Cardiac septum (tissue), 1 donor: ENCODE measurements at regions of chr11 and their contacts with region 1.

Region 1: GRCh38 chr11:112881461-112881860 is 79.8 kb upstream of the NCAM1 start:
- DNase-seq: peak; percentile 92

Region 2: DNA sequence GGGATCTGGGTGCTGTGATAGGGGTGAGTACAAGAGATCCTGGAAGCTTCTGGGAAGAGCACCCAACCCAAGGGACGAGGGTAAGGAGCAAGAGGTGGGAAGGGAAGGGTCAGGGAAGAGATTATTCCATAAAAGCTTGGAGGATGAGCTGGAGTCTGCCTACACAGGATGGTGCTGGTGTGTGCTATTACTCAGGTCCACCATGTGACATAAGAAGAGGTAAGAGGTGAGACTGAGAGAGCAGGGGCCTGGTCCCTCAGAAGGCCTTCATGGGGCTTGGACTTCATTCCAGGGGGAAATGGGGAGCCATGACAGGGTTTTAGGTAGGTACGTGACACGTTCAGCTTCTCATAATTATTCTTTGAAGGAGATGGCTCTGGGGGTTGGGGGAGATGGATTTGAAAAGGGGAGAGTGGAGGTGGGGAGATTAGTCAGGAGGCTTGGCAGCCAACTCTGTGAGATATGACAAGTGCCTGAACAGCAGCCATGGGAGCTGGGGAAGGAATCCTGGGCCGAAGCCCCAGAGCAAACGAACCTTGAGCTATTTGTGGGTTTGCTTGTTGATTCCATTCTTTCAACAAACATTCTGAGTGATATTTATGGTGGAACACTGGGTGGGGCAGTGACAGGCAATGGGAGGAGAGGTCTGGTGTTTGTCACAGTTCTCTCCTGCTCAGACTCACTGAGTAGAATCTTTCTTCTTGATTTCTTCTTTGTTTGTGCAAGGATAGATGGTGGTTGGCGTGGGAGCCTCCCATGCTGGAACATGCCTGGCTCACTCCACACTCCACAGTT is 68.5 kb after region 1 on chr11:
- intact Hi-C with region 1: loop called (anchors 5 kb)
- DNase-seq: peak; percentile 87